ENCODE measurements at regions of chr9 and their contacts with region 1.

Region 1: DNA sequence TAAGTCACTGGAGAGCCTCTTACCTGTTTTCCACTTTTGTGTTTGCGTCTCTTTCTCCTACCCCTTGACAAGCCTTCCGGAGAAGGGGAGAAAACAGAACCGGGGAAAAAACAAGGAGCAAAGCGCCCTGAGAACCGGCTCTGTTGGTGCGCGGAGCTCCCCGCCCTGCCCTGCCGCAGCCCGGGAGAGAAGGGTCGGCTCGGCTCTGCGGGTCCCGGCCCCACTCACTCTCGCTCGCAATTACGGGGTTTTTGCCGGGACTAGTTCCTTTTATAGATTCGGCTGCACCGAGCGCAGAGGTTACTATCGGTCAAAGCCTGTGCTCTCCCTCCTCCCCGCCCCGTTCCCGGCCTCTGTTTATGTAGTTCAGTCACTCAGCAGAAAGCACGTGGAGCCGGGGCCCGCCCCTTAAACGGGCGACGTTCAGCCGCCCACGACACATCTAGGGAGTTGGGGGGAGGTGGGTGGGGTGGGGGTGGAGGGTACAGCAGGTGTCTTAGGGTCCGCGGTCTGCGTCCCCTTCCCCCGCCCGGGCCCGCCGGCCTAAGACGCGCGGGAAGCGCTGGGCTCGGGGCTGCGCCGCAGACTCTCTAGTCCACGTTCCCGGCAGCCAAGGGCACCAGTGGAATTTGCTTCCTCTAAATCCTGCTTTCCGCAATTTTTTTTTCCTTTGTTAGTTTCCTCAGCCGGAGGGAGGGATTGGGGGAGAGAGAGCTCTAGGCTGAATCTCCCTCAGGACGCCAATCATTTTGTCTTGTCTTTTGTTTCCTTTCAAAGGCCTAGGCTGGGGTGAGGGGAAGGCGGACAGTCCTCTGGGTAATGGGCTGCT is at the start of gene ABCA1:
- DNase-seq: peak; percentile 86 to 93 (median 91)
- H3K4me3 ChIP-seq: peak within 1 kb of the TSS; percentile 71
- H3K27ac ChIP-seq: peak within 1 kb of the TSS; percentile 13 to 71
- H3K4me1 ChIP-seq: no peaks in the 10 kb centered on the region
- H3K27me3 ChIP-seq: no peaks in the 10 kb centered on the region
- CTCF ChIP-seq: no peak
- EP300 ChIP-seq: no peak
- POLR2A ChIP-seq: peak; percentile 27
- total RNA-seq, gene ABCA1: 7.9 to 24.5 (median 19.4) TPM

Region 2: GRCh38 chr9:104863180-104863883 is 64.8 kb before region 1 on chr9:
- intact Hi-C with region 1: loop called in 3 of 4 experiments (anchors 2 to 10 kb)
- DNase-seq: peak; percentile 50 to 57 (median 52)
- H3K4me3 ChIP-seq: no peak overlapping the region
- H3K27ac ChIP-seq: peak overlapping the region in 1 of 2 donors; percentile 10
- H3K4me1 ChIP-seq: peaks cover 23% of the 10 kb centered on the region
- H3K27me3 ChIP-seq: no peaks in the 10 kb centered on the region
- CTCF ChIP-seq: peak; percentile 28 to 73 (median 42)
- EP300 ChIP-seq: no peak
- POLR2A ChIP-seq: no peak

Region 3: DNA sequence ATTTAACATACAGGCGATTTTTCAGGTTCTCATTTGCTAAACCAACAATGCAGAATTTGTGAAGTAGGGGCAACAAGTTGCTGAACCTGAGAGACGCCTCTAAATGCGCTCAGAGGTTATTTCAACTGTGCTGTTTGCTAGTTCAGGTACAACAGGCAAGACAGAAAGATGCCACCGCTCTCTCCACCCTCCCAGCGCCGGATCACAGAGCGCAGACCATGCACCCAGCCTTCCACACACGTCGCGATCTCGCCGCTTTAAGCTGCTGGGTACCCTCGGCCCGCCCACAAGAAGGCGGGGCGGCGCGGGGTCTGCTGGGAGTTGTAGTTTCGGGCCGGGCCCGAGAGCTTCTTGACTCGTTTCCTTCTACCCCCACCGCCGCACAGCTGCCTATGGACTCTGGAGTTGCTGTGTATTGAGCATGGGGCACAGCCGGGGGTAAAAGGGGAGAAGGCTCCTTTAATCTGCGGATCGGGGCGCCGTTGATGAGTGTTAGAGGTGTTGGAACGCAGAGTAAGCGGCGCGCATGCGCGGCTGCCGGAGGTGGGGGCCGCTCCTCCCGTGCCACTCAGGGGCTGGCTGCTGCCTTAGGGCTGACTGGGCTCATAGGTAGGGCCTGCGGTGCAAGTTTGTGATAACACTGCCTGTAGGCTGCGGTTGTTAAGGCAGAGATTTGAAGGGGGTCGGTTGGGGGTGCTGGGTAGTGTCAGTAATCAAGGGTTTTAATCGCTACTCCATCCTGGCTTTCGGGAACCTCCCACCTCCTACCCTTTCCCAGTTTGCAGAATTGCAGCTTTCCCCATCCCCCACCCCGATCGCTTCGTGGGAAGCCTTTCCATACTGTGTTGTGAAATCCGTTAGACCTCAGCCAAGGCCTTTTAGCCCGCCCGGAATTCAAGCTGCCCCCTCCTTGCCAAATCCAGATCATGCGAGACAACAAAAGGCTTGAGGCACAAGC is 40.2 kb after region 1 on chr9:
- intact Hi-C with region 1: loop called in 3 of 4 experiments (anchors 5 kb)
- DNase-seq: peak; percentile 85 to 92 (median 90)
- H3K4me3 ChIP-seq: peak overlapping the region; percentile 67
- H3K27ac ChIP-seq: peak overlapping the region; percentile 67 to 86
- H3K4me1 ChIP-seq: peaks cover 2% of the 10 kb centered on the region
- H3K27me3 ChIP-seq: no peaks in the 10 kb centered on the region
- CTCF ChIP-seq: no peak
- EP300 ChIP-seq: no peak
- POLR2A ChIP-seq: peak; percentile 16

Region 4: GRCh38 chr9:105064315-105065097 is 136.4 kb after region 1 on chr9:
- intact Hi-C with region 1: loop called in 2 of 4 experiments (anchors 5 to 10 kb)
- DNase-seq: peak; percentile 87 to 92 (median 89)
- H3K4me3 ChIP-seq: no peak overlapping the region
- H3K27ac ChIP-seq: peak overlapping the region; percentile 61 to 78
- H3K4me1 ChIP-seq: peaks cover 14% of the 10 kb centered on the region
- H3K27me3 ChIP-seq: no peaks in the 10 kb centered on the region
- CTCF ChIP-seq: no peak
- EP300 ChIP-seq: no peak
- POLR2A ChIP-seq: no peak

Region 5: GRCh38 chr9:105414947-105415661 is 487.0 kb after region 1 on chr9:
- intact Hi-C with region 1: loop called in 1 of 4 experiments (anchors 10 kb)
- DNase-seq: peak; percentile 44 to 73 (median 58)
- H3K4me3 ChIP-seq: no peak overlapping the region
- H3K27ac ChIP-seq: no peak overlapping the region
- H3K4me1 ChIP-seq: peaks cover 2% of the 10 kb centered on the region
- H3K27me3 ChIP-seq: no peaks in the 10 kb centered on the region
- CTCF ChIP-seq: peak; percentile 75 to 86 (median 81)
- EP300 ChIP-seq: no peak
- POLR2A ChIP-seq: no peak